ENCODE measurements at regions of chr6 and their contacts with region 1.

Region 1: GRCh38 chr6:73739096-73739495 is 43.1 kb downstream of the CD109 start:
- DNase-seq: no peak
- ATAC-seq: peak; percentile 65

Region 2: GRCh38 chr6:74066168-74066871 is 327.2 kb after region 1 on chr6:
- intact Hi-C with region 1: no loop called
- DNase-seq: no peak
- ATAC-seq: no peak

Region 3: DNA sequence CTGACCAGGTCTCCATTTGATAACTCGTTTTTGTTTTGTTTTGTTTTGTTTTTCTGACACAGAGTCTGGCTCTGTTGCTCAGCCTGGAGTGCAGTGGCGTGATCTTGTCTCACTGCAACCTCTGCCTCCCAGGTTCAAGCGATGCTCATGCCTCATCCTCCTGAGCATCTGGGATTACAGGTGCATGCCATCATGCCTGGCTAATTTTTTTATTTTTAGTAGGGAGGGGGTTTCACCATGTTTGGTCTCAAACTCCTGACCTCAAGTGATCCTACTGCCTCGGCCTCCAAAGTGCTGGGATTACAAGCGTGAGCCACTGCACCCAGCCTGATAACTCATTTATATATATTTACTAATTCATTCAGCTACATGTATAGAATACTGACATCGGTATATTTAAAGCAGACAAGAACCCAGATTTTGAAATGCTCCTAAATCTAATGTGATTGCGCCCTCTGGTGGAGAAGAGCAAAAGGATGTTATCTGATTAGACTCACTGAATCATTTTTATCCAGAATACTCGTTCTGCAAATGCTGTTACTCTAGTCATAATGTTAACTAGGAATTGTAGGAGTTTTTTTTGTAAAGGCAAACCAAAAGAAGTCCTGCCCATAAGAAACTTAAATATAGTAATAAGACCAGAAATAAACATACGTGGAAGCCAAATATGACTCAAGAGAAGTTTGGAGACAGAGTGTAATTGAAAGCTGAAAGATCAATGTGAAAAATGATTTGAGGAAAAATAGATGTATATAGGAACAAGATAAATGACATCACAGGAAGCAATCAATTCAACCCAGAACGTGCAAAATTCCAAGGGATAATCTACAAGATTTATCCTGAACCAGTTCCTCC is 1472.0 kb after region 1 on chr6:
- intact Hi-C with region 1: loop called in 1 of 2 experiments (anchors 5 kb)
- DNase-seq: peak in 1 of 2 donors; percentile 54
- ATAC-seq: peak; percentile 41